ENCODE measurements at regions of chr2 and their contacts with region 1.

Region 1: GRCh38 chr2:67895227-67895941 is 167.4 kb downstream of the C1D start:
- DNase-seq: no peak
- H3K4me3 ChIP-seq: no peak overlapping the region
- H3K27ac ChIP-seq: no peak overlapping the region
- H3K4me1 ChIP-seq: no peaks in the 10 kb centered on the region
- H3K27me3 ChIP-seq: no peaks in the 10 kb centered on the region
- CTCF ChIP-seq: no peak
- POLR2A ChIP-seq: no peak

Region 2: GRCh38 chr2:66748939-66749338 is 1146.4 kb before region 1 on chr2:
- intact Hi-C with region 1: loop called (anchors 5 kb)
- DNase-seq: no peak
- H3K4me3 ChIP-seq: no peak overlapping the region
- H3K27ac ChIP-seq: no peak overlapping the region
- H3K4me1 ChIP-seq: no peaks in the 10 kb centered on the region
- H3K27me3 ChIP-seq: no peaks in the 10 kb centered on the region
- CTCF ChIP-seq: no peak
- POLR2A ChIP-seq: no peak

Region 3: DNA sequence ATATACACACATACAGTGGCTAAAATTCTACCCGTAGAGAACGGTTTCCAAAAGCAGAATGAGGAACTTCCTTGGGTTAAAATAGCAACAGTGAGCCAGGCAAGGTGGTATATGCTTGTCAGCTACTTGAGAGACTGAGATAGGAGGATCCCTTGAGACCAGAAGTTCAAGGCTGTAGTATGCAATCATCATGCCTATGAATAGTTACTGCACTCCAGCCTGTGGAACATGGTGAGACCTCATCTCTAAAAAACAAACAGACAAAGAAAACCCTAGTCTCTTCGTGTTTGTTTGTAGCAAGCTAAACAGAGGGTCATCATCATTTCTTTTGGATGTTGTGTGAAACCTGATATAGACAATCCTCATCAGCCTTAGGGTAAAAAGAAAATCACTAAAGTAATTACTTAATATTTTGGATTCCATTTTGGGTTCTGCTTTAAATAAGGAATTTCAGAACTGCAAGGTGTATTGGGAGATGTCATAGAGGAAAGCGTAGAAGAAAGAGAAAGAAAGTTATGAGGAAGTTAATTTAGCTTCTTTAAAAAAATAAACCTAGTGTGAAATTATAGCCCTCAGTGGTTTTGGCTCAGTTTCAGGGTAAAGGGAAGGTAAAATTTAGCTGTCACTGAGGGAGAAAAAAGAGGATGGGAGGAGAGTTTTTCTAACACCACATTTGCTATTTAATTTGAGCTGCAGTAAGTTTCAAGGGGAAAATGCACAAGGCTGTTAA is 516.2 kb after region 1 on chr2:
- intact Hi-C with region 1: no loop called
- DNase-seq: no peak
- H3K4me3 ChIP-seq: no peak overlapping the region
- H3K27ac ChIP-seq: no peak overlapping the region
- H3K4me1 ChIP-seq: no peaks in the 10 kb centered on the region
- H3K27me3 ChIP-seq: no peaks in the 10 kb centered on the region
- CTCF ChIP-seq: no peak
- POLR2A ChIP-seq: no peak